Naive thymus-derived CD4-positive, alpha-beta T cell (primary cell): ENCODE measurements at regions of chr18 and their contacts with region 1.

Region 1: DNA sequence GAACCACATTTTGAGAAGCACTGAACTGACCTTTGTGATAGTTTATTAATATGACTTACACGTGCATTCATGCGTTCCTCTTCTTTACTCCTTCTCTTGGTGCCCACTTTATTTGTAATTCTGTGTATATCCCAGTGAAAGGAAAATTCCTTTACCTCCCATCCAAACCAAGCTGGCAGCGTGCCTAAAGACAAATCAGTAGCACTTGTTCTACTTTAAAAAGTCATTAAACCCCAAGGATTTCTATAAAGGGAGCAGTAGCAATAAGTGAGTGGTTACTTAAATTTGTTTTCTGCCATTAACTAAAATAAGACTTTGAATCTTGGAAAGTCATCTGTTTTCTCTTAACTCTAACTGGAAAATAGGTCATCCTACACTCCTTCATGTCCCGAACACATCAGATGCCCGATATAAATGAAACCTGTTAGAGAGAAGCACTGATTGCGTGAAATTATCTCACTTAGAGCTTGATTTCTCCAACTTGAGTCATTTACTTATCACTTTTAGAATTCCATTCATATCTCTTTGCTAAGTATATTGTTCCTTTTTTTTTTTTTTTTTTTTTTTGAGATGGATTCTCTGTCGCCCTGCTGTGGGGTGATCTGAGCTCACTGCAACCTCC is 10.7 kb downstream of the PIK3C3 start:
- DNase-seq: no peak
- ATAC-seq: no peak
- H3K4me3 ChIP-seq: no peak overlapping the region
- H3K4me3 Mint-ChIP-seq: no peak overlapping the region
- H3K27ac ChIP-seq: no peak overlapping the region
- H3K27ac Mint-ChIP-seq: peak overlapping the region in 1 of 9 donors; percentile 56
- H3K4me1 ChIP-seq: peaks cover 0 to 4% of the 10 kb centered on the region in 2 donors
- H3K4me1 Mint-ChIP-seq: peaks cover 11 to 82% (median 66%) of the 10 kb centered on the region in 7 donors
- H3K27me3 ChIP-seq: no peaks in the 10 kb centered on the region
- H3K27me3 Mint-ChIP-seq: no peaks in the 10 kb centered on the region

Region 2: DNA sequence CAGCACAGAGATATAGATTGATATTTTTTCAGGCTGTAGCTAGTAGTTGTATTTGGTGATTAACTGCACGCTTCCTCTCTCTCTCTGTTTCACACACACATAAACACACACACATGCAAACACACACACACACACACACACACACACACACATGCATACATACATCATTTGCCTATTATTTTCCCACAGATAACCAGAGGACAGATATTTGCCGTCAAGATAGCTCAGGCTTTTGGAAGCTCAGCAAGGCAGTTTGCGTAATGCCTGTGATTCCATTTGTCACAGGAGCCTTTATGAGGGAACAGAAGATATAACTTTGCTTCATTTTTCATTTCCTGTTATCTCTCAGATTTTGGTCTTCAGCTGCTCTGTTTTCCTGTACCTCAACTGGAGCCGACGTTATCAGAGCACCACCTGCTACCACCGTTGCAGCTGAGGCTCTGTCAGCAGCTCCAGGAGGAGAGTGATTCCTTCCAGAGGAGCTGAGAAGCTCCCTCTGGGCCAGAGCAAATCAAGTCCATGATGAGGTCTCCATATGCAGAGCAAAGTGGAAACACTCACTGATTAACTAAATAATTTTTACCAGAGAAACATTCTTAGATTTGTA is 352.6 kb before region 1 on chr18:
- CTCF ChIA-PET with region 1: no interaction called
- POLR2A ChIA-PET with region 1: no interaction called
- intact Hi-C with region 1: no loop called
- DNase-seq: no peak
- ATAC-seq: no peak
- H3K4me3 ChIP-seq: no peak overlapping the region
- H3K4me3 Mint-ChIP-seq: no peak overlapping the region
- H3K27ac ChIP-seq: no peak overlapping the region
- H3K27ac Mint-ChIP-seq: no peak overlapping the region
- H3K4me1 ChIP-seq: no peaks in the 10 kb centered on the region
- H3K4me1 Mint-ChIP-seq: no peaks in the 10 kb centered on the region
- H3K27me3 ChIP-seq: no peaks in the 10 kb centered on the region
- H3K27me3 Mint-ChIP-seq: no peaks in the 10 kb centered on the region

Region 3: DNA sequence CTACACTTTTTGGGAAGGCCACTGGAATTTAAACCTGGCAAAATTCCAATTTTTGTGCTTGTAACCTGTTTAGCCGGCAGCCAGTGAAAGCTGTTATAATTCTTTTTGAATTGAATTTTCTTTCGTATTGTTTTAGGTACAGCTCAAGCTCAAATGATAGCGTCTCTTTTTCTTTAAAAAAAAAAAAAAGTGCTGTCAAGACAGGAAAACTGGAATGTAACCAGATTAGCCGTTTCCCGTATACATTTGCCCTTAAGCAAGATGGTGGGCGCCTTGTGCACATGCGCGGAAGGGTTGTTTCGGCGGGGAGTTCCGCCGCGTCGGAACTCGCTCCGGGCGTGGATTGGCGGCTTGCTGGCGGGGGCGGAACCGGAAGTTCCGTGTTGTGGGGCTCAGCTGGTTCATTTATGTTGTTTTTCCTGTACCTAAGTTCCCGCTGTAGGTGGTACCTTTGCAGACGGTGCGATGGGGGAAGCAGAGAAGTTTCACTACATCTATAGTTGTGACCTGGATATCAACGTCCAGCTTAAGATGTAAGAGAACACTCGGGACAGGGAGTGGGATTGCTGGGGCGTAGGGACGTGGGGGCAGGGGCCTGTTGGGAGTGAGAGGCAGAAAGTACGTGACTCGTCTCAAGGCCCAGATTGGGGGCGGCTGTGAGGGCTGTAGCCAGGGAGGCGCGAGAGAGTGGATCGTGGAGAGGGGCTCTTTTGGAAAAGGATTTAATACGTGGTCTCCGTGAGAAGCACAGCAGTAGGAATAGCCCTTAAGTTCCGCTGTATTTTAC is 10.7 kb before region 1 on chr18 and contains the start of gene PIK3C3:
- CTCF ChIA-PET with region 1: no interaction called
- POLR2A ChIA-PET with region 1: interaction called, 3 read pairs
- intact Hi-C with region 1: loop called in 1 of 2 experiments (anchors 2 kb)
- DNase-seq: peak; percentile 90 to 97 (median 95)
- ATAC-seq: peak; percentile 96
- H3K4me3 ChIP-seq: peak within 1 kb of the TSS; percentile 80
- H3K4me3 Mint-ChIP-seq: peak within 1 kb of the TSS; percentile 96 to 100 (median 100)
- H3K27ac ChIP-seq: peak within 1 kb of the TSS; percentile 91
- H3K27ac Mint-ChIP-seq: peak within 1 kb of the TSS; percentile 97 to 100 (median 99)
- H3K4me1 ChIP-seq: peaks cover 28 to 31% of the 10 kb centered on the region in 2 donors
- H3K4me1 Mint-ChIP-seq: peaks cover 26 to 50% (median 42%) of the 10 kb centered on the region in 7 donors
- H3K27me3 ChIP-seq: no peaks in the 10 kb centered on the region
- H3K27me3 Mint-ChIP-seq: peaks cover 0 to 6% (median 0%) of the 10 kb centered on the region in 5 donors
- total RNA-seq, gene PIK3C3: 47.4 to 76.9 (median 59.7) TPM

Region 4: DNA sequence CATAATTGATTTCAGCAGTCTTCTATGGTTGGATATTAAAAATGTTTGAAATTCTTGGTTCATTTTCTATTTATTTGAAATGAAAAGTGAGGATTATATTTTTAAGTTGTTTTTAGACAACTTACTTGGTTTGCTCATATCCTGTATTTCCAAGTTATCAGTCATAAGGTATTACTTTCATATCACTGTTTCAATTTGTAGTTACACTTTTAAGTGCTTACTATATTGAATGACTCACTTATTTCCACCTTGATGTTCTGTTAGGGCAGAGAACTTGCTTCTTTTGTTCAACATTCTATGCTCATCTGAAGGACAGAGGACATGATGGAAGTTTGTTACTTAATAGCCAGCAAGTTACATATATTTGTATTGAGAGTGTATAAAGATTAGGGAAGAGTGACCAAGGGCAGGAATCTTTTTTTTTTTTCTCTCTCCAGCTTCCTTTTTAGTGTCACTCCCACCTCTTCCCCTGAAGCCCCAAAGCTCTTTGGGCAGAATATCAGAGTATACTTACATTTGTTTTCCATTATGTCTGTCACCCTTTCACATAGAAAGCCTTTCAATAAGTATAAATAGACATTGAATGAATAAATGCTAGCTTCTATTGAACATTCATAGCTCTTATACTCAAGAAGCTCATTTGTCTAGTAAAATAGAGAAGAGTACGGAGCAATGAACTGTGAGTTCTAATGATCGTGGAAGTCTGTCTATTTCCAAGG is 17.4 kb after region 1 on chr18:
- CTCF ChIA-PET with region 1: interaction called, 5 read pairs
- POLR2A ChIA-PET with region 1: no interaction called
- intact Hi-C with region 1: loop called in 1 of 2 experiments (anchors 2 kb)
- DNase-seq: no peak
- ATAC-seq: no peak
- H3K4me3 ChIP-seq: no peak overlapping the region
- H3K4me3 Mint-ChIP-seq: peak overlapping the region in 1 of 10 donors; percentile 13
- H3K27ac ChIP-seq: no peak overlapping the region
- H3K27ac Mint-ChIP-seq: peak overlapping the region in 3 of 9 donors; percentile 27 to 74 (median 37)
- H3K4me1 ChIP-seq: no peaks in the 10 kb centered on the region
- H3K4me1 Mint-ChIP-seq: peaks cover 12 to 49% (median 32%) of the 10 kb centered on the region in 7 donors
- H3K27me3 ChIP-seq: no peaks in the 10 kb centered on the region
- H3K27me3 Mint-ChIP-seq: no peaks in the 10 kb centered on the region

Region 5: DNA sequence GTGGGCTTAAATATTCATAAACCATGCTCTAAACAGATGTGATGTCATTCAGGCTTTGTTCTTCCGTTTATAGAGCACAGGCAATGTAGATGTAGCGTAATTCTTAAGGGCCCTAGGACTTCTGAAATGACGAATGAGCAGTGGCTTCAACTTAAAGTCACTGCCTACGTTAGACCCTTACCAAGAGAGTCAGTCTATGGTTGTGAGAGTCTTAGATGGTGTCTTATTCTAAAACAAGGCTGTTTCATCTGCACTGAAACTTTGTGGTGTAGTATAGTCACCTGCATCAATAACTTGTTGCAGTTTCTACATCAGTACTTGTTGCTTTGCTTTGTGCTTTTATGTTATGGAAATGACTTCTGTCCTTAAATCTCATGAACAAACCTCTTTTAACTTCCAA is 45.3 kb after region 1 on chr18:
- CTCF ChIA-PET with region 1: no interaction called
- POLR2A ChIA-PET with region 1: no interaction called
- intact Hi-C with region 1: no loop called
- DNase-seq: no peak
- ATAC-seq: no peak
- H3K4me3 ChIP-seq: no peak overlapping the region
- H3K4me3 Mint-ChIP-seq: no peak overlapping the region
- H3K27ac ChIP-seq: no peak overlapping the region
- H3K27ac Mint-ChIP-seq: peak overlapping the region in 2 of 9 donors; percentile 16 to 38
- H3K4me1 ChIP-seq: no peaks in the 10 kb centered on the region
- H3K4me1 Mint-ChIP-seq: peaks cover 0 to 20% (median 5%) of the 10 kb centered on the region in 7 donors
- H3K27me3 ChIP-seq: no peaks in the 10 kb centered on the region
- H3K27me3 Mint-ChIP-seq: no peaks in the 10 kb centered on the region